HCT116 (cell line): ENCODE measurements at regions of chr2 and their contacts with region 1.

Region 1: DNA sequence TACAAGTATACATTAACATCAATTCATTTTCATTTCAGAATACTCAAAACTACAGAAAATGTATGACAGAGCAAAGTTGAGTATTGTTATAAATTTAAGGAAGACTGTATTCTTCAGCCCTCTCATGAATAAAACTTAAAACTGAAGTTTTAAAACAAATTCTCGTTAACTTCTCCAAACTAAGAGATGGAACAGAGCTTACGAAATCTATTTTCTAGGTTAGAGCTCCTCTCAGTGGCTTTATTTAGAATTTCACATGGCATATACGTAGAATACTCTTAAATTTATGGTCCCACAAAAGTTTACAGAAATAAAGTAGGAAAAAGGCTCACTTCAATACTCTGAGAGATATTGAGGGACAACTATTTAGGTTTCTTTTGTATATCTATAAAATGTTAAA is 612.1 kb downstream of the KCNJ3 start:
- DNase-seq: peak; percentile 47
- ATAC-seq: peak; percentile 69
- H3K4me3 ChIP-seq: no peak overlapping the region
- H3K27ac ChIP-seq: no peak overlapping the region
- H3K4me1 ChIP-seq: no peaks in the 10 kb centered on the region
- H3K27me3 ChIP-seq: no peaks in the 10 kb centered on the region
- CTCF ChIP-seq: peak; percentile 37 to 76 (median 52); a peak in 5 of 6 replicates
- POLR2A ChIP-seq: no peak
- RAD21 ChIP-seq: peak; percentile 78

Region 2: GRCh38 chr2:154402218-154402617 is 908.4 kb before region 1 on chr2:
- CTCF ChIA-PET with region 1: interaction called, 12 read pairs
- POLR2A ChIA-PET with region 1: no interaction called
- RAD21 ChIA-PET with region 1: no interaction called
- intact Hi-C with region 1: loop called (anchors 1 kb)
- DNase-seq: peak; percentile 43
- ATAC-seq: peak; percentile 67; the same call in 1 of the 2 replicates
- H3K4me3 ChIP-seq: no peak overlapping the region
- H3K27ac ChIP-seq: no peak overlapping the region
- H3K4me1 ChIP-seq: no peaks in the 10 kb centered on the region
- H3K27me3 ChIP-seq: no peaks in the 10 kb centered on the region
- CTCF ChIP-seq: peak; percentile 25 to 65 (median 55); a peak in 5 of 6 replicates
- POLR2A ChIP-seq: no peak
- RAD21 ChIP-seq: peak; percentile 53

Region 3: DNA sequence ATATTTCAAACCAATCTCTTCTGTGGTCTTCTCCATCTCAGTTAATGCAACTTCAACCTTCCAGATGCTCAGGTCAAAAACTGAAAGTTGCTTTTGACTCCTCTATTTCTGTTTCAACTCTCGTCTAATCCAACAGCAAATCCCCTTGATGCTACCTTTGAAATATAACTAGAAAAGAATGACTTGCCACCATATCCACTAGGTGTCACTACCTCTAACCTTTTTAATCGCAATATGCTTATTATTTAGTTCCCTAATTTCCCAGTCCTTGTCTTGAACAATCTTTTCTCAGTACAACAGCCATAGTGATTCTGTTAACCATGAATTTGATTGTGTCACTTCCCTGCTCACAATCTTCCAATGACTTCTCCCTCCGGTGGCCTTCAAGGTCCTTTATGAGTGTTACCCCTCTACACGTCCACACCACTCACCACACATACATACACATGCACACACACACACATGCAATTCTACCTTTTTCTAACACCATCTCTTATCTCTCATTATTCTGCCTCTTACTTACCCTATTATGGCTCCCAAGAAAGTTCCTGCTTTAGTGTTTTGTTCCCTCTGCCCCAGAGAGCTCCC is 857.6 kb before region 1 on chr2:
- CTCF ChIA-PET with region 1: no interaction called
- POLR2A ChIA-PET with region 1: no interaction called
- RAD21 ChIA-PET with region 1: no interaction called
- intact Hi-C with region 1: loop called (anchors 1 kb)
- DNase-seq: peak; percentile 27
- ATAC-seq: peak; percentile 77; the same call in 1 of the 2 replicates
- H3K4me3 ChIP-seq: no peak overlapping the region
- H3K27ac ChIP-seq: no peak overlapping the region
- H3K4me1 ChIP-seq: no peaks in the 10 kb centered on the region
- H3K27me3 ChIP-seq: no peaks in the 10 kb centered on the region
- CTCF ChIP-seq: peak; percentile 30 to 69 (median 38); a peak in 4 of 6 replicates
- POLR2A ChIP-seq: no peak
- RAD21 ChIP-seq: peak; percentile 57

Region 4: GRCh38 chr2:154623819-154624218 is 686.8 kb before region 1 on chr2:
- CTCF ChIA-PET with region 1: no interaction called
- POLR2A ChIA-PET with region 1: no interaction called
- RAD21 ChIA-PET with region 1: no interaction called
- intact Hi-C with region 1: loop called (anchors 1 kb)
- DNase-seq: peak; percentile 56
- ATAC-seq: peak; percentile 80
- H3K4me3 ChIP-seq: no peak overlapping the region
- H3K27ac ChIP-seq: no peak overlapping the region
- H3K4me1 ChIP-seq: peaks cover 0 to 8% of the 10 kb centered on the region in 2 experiments; a peak in 1 of 4 replicates
- H3K27me3 ChIP-seq: no peaks in the 10 kb centered on the region
- CTCF ChIP-seq: peak; percentile 58 to 85 (median 80); a peak in 5 of 6 replicates
- POLR2A ChIP-seq: no peak
- RAD21 ChIP-seq: peak; percentile 74

Region 5: GRCh38 chr2:155485141-155485842 is 174.7 kb after region 1 on chr2:
- CTCF ChIA-PET with region 1: no interaction called
- POLR2A ChIA-PET with region 1: no interaction called
- RAD21 ChIA-PET with region 1: no interaction called
- intact Hi-C with region 1: no loop called
- DNase-seq: no peak
- ATAC-seq: no peak
- H3K4me3 ChIP-seq: no peak overlapping the region
- H3K27ac ChIP-seq: no peak overlapping the region
- H3K4me1 ChIP-seq: no peaks in the 10 kb centered on the region
- H3K27me3 ChIP-seq: no peaks in the 10 kb centered on the region
- CTCF ChIP-seq: no peak
- POLR2A ChIP-seq: no peak
- RAD21 ChIP-seq: no peak